HCT116 (cell line): ENCODE measurements at regions of chr7 and their contacts with region 1.

Region 1: DNA sequence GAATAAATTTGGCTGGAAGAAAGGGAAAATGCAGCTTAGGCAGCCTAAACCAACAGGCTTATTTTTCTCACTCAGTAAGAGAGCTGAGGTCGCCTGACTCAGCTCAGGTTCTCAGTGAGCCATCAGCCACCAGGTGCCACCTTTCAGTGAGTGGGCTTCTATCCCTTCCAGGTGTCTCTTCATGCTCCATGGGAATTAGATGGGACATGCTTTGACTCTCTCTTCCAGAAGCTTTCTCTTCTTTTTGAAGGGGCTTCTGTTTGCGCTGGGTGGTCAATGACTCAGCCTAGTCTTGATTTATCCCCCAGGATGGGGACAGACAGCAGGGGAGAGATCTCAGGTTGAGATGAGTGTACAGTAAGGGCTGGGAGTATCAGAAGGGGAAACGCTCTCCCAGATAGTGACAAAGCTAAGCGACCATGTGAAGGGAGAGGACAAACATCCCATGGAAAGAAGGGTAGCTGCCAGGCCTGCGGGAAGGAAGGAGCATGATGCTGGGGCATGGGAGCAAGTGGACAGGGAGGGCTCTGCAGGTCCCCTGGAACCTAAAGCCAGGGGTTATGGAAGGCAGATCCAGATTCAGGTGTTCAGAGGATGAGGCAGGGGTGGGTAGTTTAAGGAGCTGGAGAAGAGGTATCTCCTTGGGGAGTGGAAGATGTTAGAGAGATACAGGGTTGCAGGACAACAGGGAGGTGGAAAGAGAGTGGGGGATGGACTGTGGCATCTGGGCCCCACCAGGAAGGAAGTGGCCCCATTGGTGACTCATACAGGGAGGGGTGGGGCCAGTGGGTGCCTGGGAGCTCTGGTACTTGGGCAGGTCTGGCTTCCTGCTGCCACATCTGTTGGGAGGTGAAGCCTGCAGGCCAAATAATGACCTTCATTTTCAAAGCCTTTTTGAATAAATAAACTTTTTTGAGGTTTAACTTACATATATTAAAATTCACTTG is 32.5 kb downstream of the OGDH start:
- DNase-seq: peak; percentile 74
- ATAC-seq: peak; percentile 84
- H3K4me3 ChIP-seq: peak overlapping the region; percentile 25 to 40
- H3K27ac ChIP-seq: peak overlapping the region; percentile 98
- H3K4me1 ChIP-seq: peaks cover 43 to 68% of the 10 kb centered on the region in 2 experiments
- H3K27me3 ChIP-seq: no peaks in the 10 kb centered on the region
- CTCF ChIP-seq: no peak
- POLR2A ChIP-seq: peak; percentile 71
- RAD21 ChIP-seq: peak; percentile 35

Region 2: DNA sequence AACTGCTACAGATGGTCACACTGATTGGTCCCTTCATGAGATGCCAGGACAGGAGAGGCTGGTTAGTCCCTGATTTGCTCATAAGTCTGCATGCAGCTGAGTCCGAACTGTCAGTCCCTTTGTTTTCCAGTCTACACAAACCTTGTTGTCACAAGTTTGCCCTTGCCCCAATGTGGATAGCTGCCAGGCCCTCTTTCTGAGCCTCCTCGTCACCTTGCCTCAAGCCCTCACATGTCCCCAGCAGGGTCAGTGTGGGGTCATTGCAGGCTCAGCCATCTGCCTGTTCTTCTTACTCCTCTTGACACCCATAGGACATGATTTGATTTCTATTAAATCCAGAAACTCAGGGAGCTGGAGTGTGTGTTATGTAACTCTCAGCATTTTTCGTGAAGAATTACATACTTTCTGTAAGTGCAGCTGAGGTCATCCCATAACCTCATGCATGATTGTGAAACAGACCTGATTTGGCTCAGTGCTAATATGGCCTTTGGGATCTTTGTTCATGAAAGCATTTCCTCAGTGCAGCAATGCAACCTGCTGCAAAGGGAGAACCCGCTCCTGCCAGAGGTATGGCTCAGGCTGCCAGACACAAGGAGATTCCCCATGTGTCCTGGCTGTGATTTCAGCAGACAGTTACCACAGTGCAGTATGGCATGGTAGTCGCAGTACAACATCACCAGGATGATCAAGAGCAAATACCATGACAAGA is 39.7 kb after region 1 on chr7:
- CTCF ChIA-PET with region 1: no interaction called
- POLR2A ChIA-PET with region 1: no interaction called
- RAD21 ChIA-PET with region 1: no interaction called
- intact Hi-C with region 1: no loop called
- DNase-seq: no peak
- ATAC-seq: peak; percentile 29; the same call in 1 of the 2 replicates
- H3K4me3 ChIP-seq: no peak overlapping the region
- H3K27ac ChIP-seq: peak overlapping the region; percentile 16; the same call in 1 of the 2 replicates
- H3K4me1 ChIP-seq: peaks cover 5 to 24% of the 10 kb centered on the region in 2 experiments
- H3K27me3 ChIP-seq: no peaks in the 10 kb centered on the region
- CTCF ChIP-seq: no peak
- POLR2A ChIP-seq: no peak
- RAD21 ChIP-seq: no peak

Region 3: DNA sequence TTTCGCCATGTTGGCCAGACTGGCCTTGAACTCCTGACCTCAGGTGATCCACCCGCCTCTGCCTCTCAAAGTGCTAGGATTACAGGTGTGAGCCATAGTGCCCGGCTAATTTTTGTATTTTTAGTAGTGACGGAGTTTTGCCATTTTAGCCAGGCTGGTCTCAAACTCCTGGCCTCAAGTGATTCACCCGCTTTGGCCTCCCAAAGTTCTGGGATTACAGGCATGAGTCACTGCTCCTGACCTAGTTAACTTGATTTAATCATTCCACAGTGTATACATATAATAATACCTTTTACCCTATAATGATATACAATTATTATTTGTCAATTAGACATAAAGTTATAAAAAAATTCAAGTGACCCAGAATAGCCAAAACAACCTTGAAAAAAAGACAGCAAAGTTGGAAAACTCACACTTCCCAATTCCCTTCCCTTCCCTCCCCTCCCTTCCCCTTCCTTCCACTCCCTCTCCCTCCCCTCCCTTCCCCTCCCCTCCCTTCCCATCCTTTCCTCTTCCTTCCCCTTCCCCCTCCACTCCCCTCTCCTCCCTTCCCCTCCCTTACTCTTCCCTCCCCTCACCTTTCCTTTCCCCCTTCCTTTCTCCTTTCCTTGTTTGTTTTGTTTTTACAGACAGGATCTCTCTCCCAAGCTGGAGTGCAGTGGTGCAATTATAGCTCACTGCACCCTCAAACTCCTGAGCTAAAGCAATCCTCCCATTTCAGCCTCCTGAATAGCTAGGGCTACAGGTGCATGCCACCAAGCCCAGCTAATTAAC is 95.0 kb after region 1 on chr7:
- CTCF ChIA-PET with region 1: no interaction called
- POLR2A ChIA-PET with region 1: interaction called, 4 read pairs
- RAD21 ChIA-PET with region 1: no interaction called
- intact Hi-C with region 1: loop called (anchors 5 kb)
- DNase-seq: peak; percentile 66
- ATAC-seq: peak; percentile 55
- H3K4me3 ChIP-seq: 0 out of 4 replicates have a peak overlapping the region, but pooled peaks of 1 of the 2 experiments have one; percentile 11
- H3K27ac ChIP-seq: peak overlapping the region; percentile 93
- H3K4me1 ChIP-seq: peaks cover 22 to 64% of the 10 kb centered on the region in 2 experiments
- H3K27me3 ChIP-seq: no peaks in the 10 kb centered on the region
- CTCF ChIP-seq: no peak
- POLR2A ChIP-seq: no peak
- RAD21 ChIP-seq: no peak

Region 4: GRCh38 chr7:44748045-44748947 is 109.4 kb after region 1 on chr7 and contains the start of gene ZMIZ2:
- CTCF ChIA-PET with region 1: no interaction called
- POLR2A ChIA-PET with region 1: no interaction called
- RAD21 ChIA-PET with region 1: no interaction called
- intact Hi-C with region 1: loop called (anchors 5 kb)
- DNase-seq: peak; percentile 48
- ATAC-seq: peak; percentile 87
- H3K4me3 ChIP-seq: peak within 1 kb of the TSS; percentile 83 to 89
- H3K27ac ChIP-seq: peak within 1 kb of the TSS; percentile 92
- H3K4me1 ChIP-seq: peaks cover 18 to 28% of the 10 kb centered on the region in 2 experiments
- H3K27me3 ChIP-seq: no peaks in the 10 kb centered on the region
- CTCF ChIP-seq: no peak
- POLR2A ChIP-seq: no peak
- RAD21 ChIP-seq: no peak; the same call in 1 of the 2 replicates
- total RNA-seq, gene ZMIZ2: 91.3 TPM